ENCODE measurements at regions of chr16 and their contacts with region 1.

Region 1: GRCh38 chr16:75943705-75944514 is 217.6 kb upstream of the CPHXL start:
- DNase-seq: no peak
- H3K4me3 ChIP-seq: no peak overlapping the region
- H3K27ac ChIP-seq: no peak overlapping the region
- H3K4me1 ChIP-seq: no peaks in the 10 kb centered on the region
- CTCF ChIP-seq: no peak

Region 2: GRCh38 chr16:75801307-75801706 is 142.6 kb before region 1 on chr16:
- CTCF ChIA-PET with region 1: no interaction called
- POLR2A ChIA-PET with region 1: no interaction called
- intact Hi-C with region 1: loop called (anchors 5 kb)
- DNase-seq: no peak
- H3K4me3 ChIP-seq: no peak overlapping the region
- H3K27ac ChIP-seq: no peak overlapping the region
- H3K4me1 ChIP-seq: no peaks in the 10 kb centered on the region
- CTCF ChIP-seq: peak; percentile 69

Measured in OCI-LY7 (cell line).